T-cell (primary cell): ENCODE measurements at regions of chr15 and their contacts with region 1.

Region 1: GRCh38 chr15:89129123-89129815 is 41.0 kb downstream of the ABHD2 start:
- DNase-seq: peak in 32 of 35 experiments; percentile 23 to 75 (median 46)
- ATAC-seq: peak; percentile 55 to 73 (median 63)
- H3K4me3 ChIP-seq: no peak overlapping the region
- H3K4me3 Mint-ChIP-seq: no peak overlapping the region
- H3K27ac ChIP-seq: peak overlapping the region; percentile 12
- H3K27ac Mint-ChIP-seq: no peak overlapping the region
- H3K4me1 ChIP-seq: peaks cover 0 to 25% of the 10 kb centered on the region in 2 experiments
- H3K4me1 Mint-ChIP-seq: peaks cover 7 to 28% (median 14%) of the 10 kb centered on the region in 3 donors
- H3K27me3 ChIP-seq: no peaks in the 10 kb centered on the region
- H3K27me3 Mint-ChIP-seq: no peaks in the 10 kb centered on the region

Region 2: DNA sequence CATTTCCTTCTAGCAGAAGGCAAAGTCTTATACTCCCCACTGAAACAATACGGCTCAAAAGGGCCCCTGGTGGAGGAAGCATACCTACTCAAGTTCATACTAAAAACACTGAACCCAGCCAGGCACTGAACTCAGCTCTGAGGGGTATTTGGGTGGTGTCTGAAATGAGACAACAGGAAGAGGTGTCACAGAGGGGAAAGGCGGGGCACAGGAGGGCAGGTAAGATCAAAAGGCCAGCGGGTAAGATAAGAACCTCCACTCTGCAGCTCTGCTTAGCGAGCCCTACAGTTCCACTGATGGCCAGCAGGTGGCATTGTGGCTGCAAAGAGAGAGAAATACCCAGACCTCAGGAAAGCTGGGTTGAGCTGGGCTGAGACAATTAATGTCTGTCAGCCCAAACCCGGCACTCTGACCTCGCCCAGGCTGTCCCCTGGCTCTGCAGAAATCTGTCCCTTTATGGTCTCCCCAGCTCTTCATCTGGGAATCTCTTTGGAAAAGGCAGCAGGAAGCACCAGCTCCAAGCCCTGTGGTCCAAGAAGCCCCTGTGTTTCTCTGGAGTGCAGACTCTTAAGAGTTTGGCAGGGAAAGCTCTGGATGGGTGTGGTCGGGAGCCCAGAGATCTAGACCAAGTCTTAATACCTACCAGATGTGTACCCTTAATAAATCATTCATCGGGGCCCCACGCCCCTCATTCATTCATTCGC is 224.5 kb before region 1 on chr15:
- CTCF ChIA-PET with region 1: interaction called in 1 of 2 experiments, 11 read pairs
- POLR2A ChIA-PET with region 1: no interaction called
- DNase-seq: peak; percentile 87 to 98 (median 95)
- ATAC-seq: peak; percentile 98 to 100 (median 98)
- H3K4me3 ChIP-seq: peak overlapping the region in 1 of 2 donors; percentile 35
- H3K4me3 Mint-ChIP-seq: peak overlapping the region in 2 of 3 donors; percentile 47 to 73
- H3K27ac ChIP-seq: peak overlapping the region; percentile 82
- H3K27ac Mint-ChIP-seq: peak overlapping the region; percentile 98 to 99
- H3K4me1 ChIP-seq: peaks cover 18 to 41% of the 10 kb centered on the region in 2 experiments
- H3K4me1 Mint-ChIP-seq: peaks cover 38 to 53% (median 52%) of the 10 kb centered on the region in 3 donors
- H3K27me3 ChIP-seq: no peaks in the 10 kb centered on the region
- H3K27me3 Mint-ChIP-seq: no peaks in the 10 kb centered on the region

Region 3: DNA sequence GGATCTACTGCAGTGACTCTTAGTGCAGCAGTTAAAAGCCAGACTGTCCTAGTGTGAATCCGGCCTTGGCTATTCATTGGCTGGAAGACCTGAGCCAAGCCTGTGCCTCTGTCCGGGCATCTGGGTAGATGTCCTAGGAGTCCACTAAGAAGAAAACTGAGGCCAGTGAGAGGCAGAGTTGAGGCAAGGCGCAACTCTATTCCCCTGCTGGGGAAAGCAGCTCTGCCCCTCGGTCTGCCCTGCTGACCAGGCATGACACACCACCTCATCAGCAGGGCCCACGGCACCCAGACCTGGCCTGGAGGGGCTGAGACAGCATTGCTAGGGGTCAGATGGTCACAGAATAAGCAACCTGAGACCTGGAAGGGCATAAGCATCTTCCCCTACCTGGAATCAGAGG is 87.8 kb before region 1 on chr15:
- CTCF ChIA-PET with region 1: no interaction called
- POLR2A ChIA-PET with region 1: no interaction called
- DNase-seq: no peak
- ATAC-seq: no peak
- H3K4me3 ChIP-seq: no peak overlapping the region
- H3K4me3 Mint-ChIP-seq: no peak overlapping the region
- H3K27ac ChIP-seq: no peak overlapping the region
- H3K27ac Mint-ChIP-seq: no peak overlapping the region
- H3K4me1 ChIP-seq: no peaks in the 10 kb centered on the region
- H3K4me1 Mint-ChIP-seq: no peaks in the 10 kb centered on the region
- H3K27me3 ChIP-seq: peaks cover 0 to 10% of the 10 kb centered on the region in 2 experiments
- H3K27me3 Mint-ChIP-seq: peaks cover 15 to 20% of the 10 kb centered on the region in 2 donors

Region 4: GRCh38 chr15:89057504-89058133 is 71.7 kb before region 1 on chr15:
- CTCF ChIA-PET with region 1: interaction called, 9 to 20 read pairs
- POLR2A ChIA-PET with region 1: no interaction called
- DNase-seq: peak; percentile 45 to 88 (median 76)
- ATAC-seq: peak; percentile 89 to 96 (median 92)
- H3K4me3 ChIP-seq: no peak overlapping the region
- H3K4me3 Mint-ChIP-seq: no peak overlapping the region
- H3K27ac ChIP-seq: no peak overlapping the region
- H3K27ac Mint-ChIP-seq: no peak overlapping the region
- H3K4me1 ChIP-seq: peaks cover 0 to 7% of the 10 kb centered on the region in 2 experiments
- H3K4me1 Mint-ChIP-seq: peaks cover 7 to 10% (median 7%) of the 10 kb centered on the region in 3 donors
- H3K27me3 ChIP-seq: peaks cover 0 to 4% of the 10 kb centered on the region in 2 experiments
- H3K27me3 Mint-ChIP-seq: no peaks in the 10 kb centered on the region